ENCODE measurements at regions of chr17 and their contacts with region 1.

Region 1: GRCh38 chr17:61439473-61440301 is 12.5 kb upstream of the TBX4 start:
- DNase-seq: no peak
- H3K4me3 Mint-ChIP-seq: no peak overlapping the region
- H3K27ac Mint-ChIP-seq: no peak overlapping the region
- H3K4me1 Mint-ChIP-seq: no peaks in the 10 kb centered on the region
- H3K27me3 Mint-ChIP-seq: peaks cover 27% of the 10 kb centered on the region

Region 2: DNA sequence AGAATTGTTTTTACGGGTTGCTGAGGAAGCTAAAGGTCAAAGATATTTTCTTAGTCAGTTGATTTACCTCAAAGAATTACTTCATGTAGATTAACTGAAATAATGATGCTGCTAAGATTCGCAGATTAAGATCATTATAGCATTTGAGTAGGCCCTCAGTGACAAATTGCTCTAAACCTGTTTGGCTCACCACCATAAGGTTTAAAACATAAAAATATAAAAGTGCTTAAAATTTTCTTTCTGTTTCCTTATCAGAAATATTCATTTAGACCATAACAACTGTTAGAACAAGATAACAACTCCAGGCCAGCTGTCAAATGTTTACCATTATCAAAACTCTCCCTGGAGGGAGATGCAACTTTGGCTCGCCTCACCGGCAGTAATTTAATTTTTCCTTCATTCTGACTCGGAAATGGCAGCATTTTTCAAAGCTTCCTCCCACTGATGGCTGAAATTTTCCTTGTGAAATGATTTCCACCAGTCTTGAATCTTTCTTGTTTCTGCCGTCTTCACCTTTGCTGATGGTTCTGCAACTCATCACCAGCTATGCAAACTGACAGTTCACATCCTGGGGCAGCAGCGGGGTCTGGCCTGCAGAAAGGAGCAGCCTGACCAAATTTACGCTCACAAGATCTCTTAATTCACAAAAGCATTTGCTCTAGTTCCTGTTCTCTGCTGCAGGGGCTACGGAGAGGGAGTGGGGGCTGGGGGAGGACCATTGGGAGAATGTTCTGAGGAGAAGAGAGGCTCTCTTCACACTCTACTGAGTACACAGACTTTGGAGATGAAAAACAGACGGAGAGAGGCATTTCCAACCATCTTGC is 294.7 kb before region 1 on chr17:
- intact Hi-C with region 1: no loop called
- DNase-seq: no peak
- H3K4me3 Mint-ChIP-seq: no peak overlapping the region
- H3K27ac Mint-ChIP-seq: no peak overlapping the region
- H3K4me1 Mint-ChIP-seq: peaks cover 5% of the 10 kb centered on the region
- H3K27me3 Mint-ChIP-seq: no peaks in the 10 kb centered on the region

Region 3: DNA sequence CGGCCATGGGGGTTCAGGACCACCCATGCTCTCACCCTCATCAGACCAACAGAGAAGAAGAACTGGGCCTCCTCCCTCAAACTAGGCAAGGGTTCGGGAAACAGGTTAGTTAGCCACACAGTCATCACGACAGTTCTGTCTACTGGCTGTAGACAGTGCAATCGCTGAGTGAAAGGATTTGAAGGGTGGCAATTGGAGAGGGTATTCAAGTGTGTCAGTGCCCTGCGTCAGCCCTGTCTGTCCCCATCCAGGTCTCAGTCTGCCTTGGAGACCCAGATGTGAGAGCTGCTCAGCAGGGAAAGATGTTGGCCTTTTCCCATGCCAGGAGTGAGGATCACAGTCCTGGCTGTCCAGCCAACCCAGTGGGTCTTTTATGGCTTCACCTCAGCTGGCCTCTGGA is 20.1 kb before region 1 on chr17:
- intact Hi-C with region 1: loop called (anchors 2 kb)
- DNase-seq: no peak
- H3K4me3 Mint-ChIP-seq: no peak overlapping the region
- H3K27ac Mint-ChIP-seq: no peak overlapping the region
- H3K4me1 Mint-ChIP-seq: no peaks in the 10 kb centered on the region
- H3K27me3 Mint-ChIP-seq: peaks cover 31% of the 10 kb centered on the region